ENCODE measurements at regions of chr6 and their contacts with region 1.

Region 1: GRCh38 chr6:158605266-158605878 is 39.2 kb downstream of the DYNLT1 start:
- DNase-seq: peak; percentile 55
- H3K4me3 ChIP-seq: no peak overlapping the region
- H3K27ac ChIP-seq: no peak overlapping the region
- H3K4me1 ChIP-seq: no peaks in the 10 kb centered on the region
- H3K27me3 ChIP-seq: no peaks in the 10 kb centered on the region
- CTCF ChIP-seq: peak in 3 of 4 experiments; percentile 50 to 83 (median 70)
- POLR2A ChIP-seq: no peak

Region 2: DNA sequence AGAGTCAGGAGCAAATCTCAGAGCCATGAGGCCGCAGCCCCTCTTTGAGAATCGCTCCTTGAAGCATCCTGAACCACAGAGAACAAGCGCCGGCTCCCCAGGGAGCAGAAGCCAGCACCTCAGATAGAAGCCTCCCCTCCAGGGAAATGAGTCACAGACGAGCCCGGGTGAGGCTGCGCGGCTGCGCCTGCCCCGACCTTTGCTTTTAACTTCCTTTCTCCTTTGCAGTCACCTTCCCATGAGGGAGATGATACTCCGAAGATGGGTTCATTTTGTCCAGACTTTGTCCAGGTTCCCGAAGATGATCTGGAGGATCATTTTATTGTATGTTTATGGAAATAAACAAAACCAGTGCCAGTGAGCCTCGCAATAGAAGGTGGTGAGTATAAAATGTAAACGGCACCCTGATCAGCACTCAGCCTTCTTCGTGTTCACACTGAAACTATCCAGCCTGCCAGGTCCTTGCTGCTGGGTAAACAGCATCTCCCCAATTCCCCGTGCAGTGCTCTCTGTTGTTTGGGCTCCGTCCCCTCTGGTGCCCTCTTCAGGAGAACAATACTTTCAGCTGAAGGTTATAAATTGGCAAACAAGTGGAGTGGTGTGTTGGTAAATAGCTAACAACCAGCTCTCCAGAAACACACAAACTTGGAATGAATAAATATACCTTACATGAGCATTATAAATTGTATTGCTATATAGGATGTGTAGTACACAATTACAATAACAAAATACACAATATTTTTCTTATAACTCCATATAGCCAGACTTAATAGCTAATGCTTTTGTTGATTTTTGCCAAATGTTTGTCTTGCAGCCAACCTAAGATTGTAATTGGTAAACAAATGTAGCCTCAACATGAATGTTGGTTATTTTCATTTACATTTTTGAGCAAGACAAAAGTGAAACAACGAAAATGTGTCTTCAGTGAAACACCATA is 86.9 kb before region 1 on chr6:
- intact Hi-C with region 1: loop called (anchors 10 kb)
- DNase-seq: peak; percentile 55
- H3K4me3 ChIP-seq: no peak overlapping the region
- H3K27ac ChIP-seq: no peak overlapping the region
- H3K4me1 ChIP-seq: no peaks in the 10 kb centered on the region
- H3K27me3 ChIP-seq: no peaks in the 10 kb centered on the region
- CTCF ChIP-seq: peak; percentile 9 to 65 (median 52)
- POLR2A ChIP-seq: no peak

Region 3: DNA sequence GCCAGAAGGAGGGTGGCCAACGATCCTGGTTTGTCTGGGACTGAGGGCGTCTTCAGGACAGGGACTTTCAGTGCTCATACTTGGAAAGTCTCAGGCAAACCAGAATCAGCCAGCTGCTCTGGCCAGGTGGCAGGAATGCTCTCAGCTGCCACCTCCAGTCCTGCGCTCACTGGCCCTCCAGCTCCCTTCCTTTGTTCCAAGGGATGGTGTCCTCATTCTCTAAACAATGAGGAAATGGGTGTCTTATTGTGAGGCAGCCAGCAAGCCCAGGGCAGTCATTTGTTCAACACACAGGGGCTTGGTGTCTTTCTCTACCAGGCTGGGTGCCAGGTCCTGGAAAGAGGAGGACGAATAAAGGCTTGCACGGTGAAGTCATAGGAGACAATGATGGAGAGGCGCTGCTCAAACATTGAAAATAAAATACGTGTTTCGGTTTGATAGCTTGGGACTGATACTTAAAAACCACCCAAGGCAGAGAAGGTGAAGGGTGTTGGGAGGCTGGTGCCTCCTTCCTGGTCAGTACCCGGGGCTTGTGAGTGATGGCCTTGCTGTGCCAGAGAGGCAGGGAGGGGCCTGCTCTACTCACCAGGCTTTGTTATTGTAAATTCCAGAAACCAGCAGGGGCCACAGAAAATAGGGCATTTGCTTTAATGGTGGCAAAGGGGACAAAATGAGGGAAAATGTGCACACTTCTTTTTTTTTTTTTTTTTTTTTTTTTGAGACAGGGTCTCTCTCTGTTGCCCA is 56.8 kb before region 1 on chr6:
- intact Hi-C with region 1: no loop called
- DNase-seq: no peak
- H3K4me3 ChIP-seq: no peak overlapping the region
- H3K27ac ChIP-seq: no peak overlapping the region
- H3K4me1 ChIP-seq: no peaks in the 10 kb centered on the region
- H3K27me3 ChIP-seq: no peaks in the 10 kb centered on the region
- CTCF ChIP-seq: no peak
- POLR2A ChIP-seq: no peak